ENCODE measurements at regions of chr11 and their contacts with region 1.

Region 1: DNA sequence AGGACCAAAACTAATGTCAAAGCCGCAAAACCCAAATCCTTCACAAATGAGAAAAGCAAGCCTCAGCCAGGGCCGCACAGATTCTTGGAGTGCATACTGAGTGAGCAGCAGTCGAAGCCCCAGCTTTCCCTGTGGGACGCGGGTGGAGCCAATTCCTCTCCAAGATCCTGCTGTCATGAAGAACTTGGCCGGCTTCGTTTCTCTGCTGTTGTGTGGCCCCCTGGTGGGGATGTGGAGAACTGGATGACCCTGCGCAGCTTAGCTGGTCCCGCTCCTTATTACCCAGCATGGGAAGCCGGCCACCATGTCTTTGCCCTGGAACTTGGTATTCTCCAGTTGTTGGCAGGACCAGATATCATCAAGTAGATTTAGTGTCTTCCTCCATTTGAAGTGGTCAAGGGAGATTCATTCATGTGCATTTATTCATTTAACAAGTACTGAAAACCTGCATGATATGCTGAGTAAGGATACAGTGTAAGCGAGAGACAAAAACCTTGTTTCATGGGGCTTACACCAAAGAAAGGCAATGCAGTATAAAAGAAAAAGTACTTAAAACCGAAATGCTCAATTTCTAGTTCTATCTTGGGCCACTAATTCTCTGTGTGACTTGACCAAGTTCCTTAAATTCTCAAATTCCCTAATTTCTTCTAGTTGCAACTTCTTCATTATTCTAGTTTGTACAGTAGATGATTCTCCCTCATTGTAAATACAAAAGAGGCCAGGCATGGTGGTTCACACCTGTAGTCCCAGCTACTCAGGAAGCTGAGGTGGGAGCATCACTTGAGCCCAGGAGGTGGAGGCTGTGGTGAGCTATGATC is 56.7 kb upstream of the CRTAM start:
- DNase-seq: peak; percentile 95
- ATAC-seq: peak; percentile 98
- H3K4me3 ChIP-seq: no peak overlapping the region
- H3K27ac ChIP-seq: no peak overlapping the region
- H3K4me1 ChIP-seq: peaks cover 14% of the 10 kb centered on the region
- H3K27me3 ChIP-seq: no peaks in the 10 kb centered on the region
- CTCF ChIP-seq: peak; percentile 98

Region 2: GRCh38 chr11:122578168-122578825 is 203.3 kb before region 1 on chr11:
- CTCF ChIA-PET with region 1: no interaction called
- POLR2A ChIA-PET with region 1: no interaction called
- intact Hi-C with region 1: loop called (anchors 1 kb)
- DNase-seq: peak; percentile 25
- ATAC-seq: no peak
- H3K4me3 ChIP-seq: no peak overlapping the region
- H3K27ac ChIP-seq: no peak overlapping the region
- H3K4me1 ChIP-seq: peaks cover 12% of the 10 kb centered on the region
- H3K27me3 ChIP-seq: no peaks in the 10 kb centered on the region
- CTCF ChIP-seq: peak; percentile 44; the same call in 1 of the 2 replicates

Region 3: GRCh38 chr11:122642472-122642922 is 139.1 kb before region 1 on chr11:
- CTCF ChIA-PET with region 1: no interaction called
- POLR2A ChIA-PET with region 1: no interaction called
- intact Hi-C with region 1: no loop called
- DNase-seq: peak; percentile 98
- ATAC-seq: peak; percentile 89
- H3K4me3 ChIP-seq: peak overlapping the region; percentile 35
- H3K27ac ChIP-seq: peak overlapping the region; percentile 89
- H3K4me1 ChIP-seq: peaks cover 37% of the 10 kb centered on the region
- H3K27me3 ChIP-seq: no peaks in the 10 kb centered on the region
- CTCF ChIP-seq: no peak